GM12878 (cell line): ENCODE measurements at regions of chr2 and their contacts with region 1.

Region 1: GRCh38 chr2:170815746-170816503 is 762 bp upstream of the GAD1 start:
- DNase-seq: no peak
- ATAC-seq: peak; percentile 75
- H3K4me3 ChIP-seq: peak overlapping the region; percentile 54
- H3K27ac ChIP-seq: no peak overlapping the region
- H3K4me1 ChIP-seq: peaks cover 11% of the 10 kb centered on the region
- H3K27me3 ChIP-seq: peaks cover 5 to 34% of the 10 kb centered on the region in 2 experiments
- CTCF ChIP-seq: peak; percentile 65 to 79 (median 78)
- EP300 ChIP-seq: no peak
- POLR2A ChIP-seq: no peak
- RAD21 ChIP-seq: peak; percentile 80

Region 2: DNA sequence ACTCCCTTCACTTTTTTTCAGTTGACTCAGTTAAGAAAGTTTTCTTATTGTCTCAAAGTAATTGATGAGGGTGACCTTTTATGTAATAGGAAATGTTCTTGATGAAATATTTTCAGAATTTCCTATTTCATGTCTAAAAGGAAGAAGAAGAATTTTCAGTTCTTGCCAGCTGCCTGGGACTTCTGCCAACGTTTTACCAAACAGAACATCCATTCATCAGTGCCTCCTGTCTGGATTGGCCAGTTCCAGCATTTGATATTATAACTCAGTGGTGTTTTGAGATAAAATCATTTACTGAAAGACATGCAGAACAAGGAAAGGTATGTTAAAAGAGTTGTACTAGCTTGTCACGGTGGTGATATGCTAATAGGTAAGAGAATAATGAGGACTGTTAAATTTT is 742.6 kb before region 1 on chr2:
- CTCF ChIA-PET with region 1: no interaction called
- POLR2A ChIA-PET with region 1: no interaction called
- RAD21 ChIA-PET with region 1: no interaction called
- SMC1A ChIA-PET with region 1: no interaction called
- in situ Hi-C with region 1: no loop called
- intact Hi-C with region 1: no loop called
- DNase-seq: no peak
- ATAC-seq: no peak
- H3K4me3 ChIP-seq: no peak overlapping the region
- H3K27ac ChIP-seq: no peak overlapping the region
- H3K4me1 ChIP-seq: peaks cover 5% of the 10 kb centered on the region; the same call in 1 of the 2 replicates
- H3K27me3 ChIP-seq: no peaks in the 10 kb centered on the region
- CTCF ChIP-seq: no peak
- EP300 ChIP-seq: no peak
- POLR2A ChIP-seq: no peak
- RAD21 ChIP-seq: no peak

Region 3: DNA sequence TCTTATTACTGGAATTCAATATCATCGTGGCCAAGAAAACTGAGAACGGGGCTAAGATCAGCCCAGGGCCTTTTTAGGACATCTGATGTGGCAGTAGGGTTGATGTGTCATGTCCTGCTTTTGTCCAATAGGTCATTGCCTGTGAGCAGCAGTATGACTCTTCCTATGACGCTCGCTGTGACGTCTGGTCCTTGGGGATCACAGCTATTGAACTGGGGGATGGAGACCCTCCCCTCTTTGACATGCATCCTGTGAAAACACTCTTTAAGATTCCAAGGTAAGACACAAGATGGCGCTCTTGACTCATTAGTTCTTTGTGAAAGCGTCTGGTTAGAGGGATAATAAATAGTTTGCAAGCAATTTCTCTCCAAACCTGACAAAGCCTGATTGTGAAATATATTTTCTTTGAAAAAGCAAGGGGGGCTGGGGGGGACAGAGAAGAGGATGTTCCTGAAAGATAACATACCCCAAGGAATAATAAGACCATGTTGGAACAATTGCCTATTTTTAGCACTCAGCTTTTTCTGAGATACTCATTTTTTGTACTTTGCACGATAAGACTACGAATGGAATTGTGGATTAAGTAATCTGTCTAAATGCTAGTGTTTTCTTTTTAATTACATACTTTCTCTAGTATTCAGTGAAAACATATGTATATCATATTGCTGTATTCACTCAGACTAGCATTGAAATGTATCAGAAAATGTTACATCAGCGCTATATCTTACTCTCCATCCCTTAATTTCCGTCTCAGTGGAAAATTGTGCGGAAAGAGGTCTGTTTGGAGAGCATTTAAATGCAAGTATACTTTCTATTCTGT is 579.9 kb before region 1 on chr2:
- CTCF ChIA-PET with region 1: interaction called, 44 read pairs
- POLR2A ChIA-PET with region 1: no interaction called
- RAD21 ChIA-PET with region 1: interaction called, 18 read pairs
- SMC1A ChIA-PET with region 1: interaction called, 6 read pairs
- in situ Hi-C with region 1: loop called (anchors 5 kb)
- intact Hi-C with region 1: loop called (anchors 1 kb)
- DNase-seq: no peak
- ATAC-seq: peak; percentile 88
- H3K4me3 ChIP-seq: no peak overlapping the region
- H3K27ac ChIP-seq: no peak overlapping the region
- H3K4me1 ChIP-seq: no peaks in the 10 kb centered on the region
- H3K27me3 ChIP-seq: no peaks in the 10 kb centered on the region
- CTCF ChIP-seq: peak; percentile 62 to 68 (median 65)
- EP300 ChIP-seq: no peak
- POLR2A ChIP-seq: no peak
- RAD21 ChIP-seq: peak; percentile 91

Region 4: DNA sequence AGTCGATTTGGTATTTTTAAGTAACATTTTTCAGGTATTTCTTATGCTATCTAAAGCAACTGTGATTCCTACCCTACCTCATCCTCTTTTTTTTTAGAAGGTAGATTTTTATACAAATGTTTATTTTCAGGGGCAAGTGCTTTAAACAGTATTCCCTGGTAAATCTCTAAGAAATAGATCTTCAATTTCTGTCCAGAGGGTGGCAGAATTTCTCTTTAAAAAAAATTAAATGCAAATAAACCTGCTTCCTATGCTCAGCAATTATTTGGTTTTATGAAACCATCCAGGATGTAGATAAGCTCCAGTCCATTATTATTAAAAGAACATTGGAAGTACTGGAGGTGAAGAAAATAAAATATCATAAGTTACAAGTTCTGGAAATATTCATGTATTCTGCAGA is 446.0 kb before region 1 on chr2:
- CTCF ChIA-PET with region 1: interaction called, 67 read pairs
- POLR2A ChIA-PET with region 1: no interaction called
- RAD21 ChIA-PET with region 1: interaction called, 23 read pairs
- SMC1A ChIA-PET with region 1: interaction called, 53 read pairs
- in situ Hi-C with region 1: no loop called
- intact Hi-C with region 1: loop called (anchors 2 kb)
- DNase-seq: no peak
- ATAC-seq: 0 out of 3 replicates have a peak, but pooled peaks have one; percentile 36
- H3K4me3 ChIP-seq: no peak overlapping the region
- H3K27ac ChIP-seq: no peak overlapping the region
- H3K4me1 ChIP-seq: no peaks in the 10 kb centered on the region; the same call in 1 of the 2 replicates
- H3K27me3 ChIP-seq: no peaks in the 10 kb centered on the region; a peak in 1 of 4 replicates
- CTCF ChIP-seq: peak in 1 of 3 experiments; percentile 36; a peak in 1 of 6 replicates
- EP300 ChIP-seq: no peak
- POLR2A ChIP-seq: no peak
- RAD21 ChIP-seq: peak; percentile 24; the same call in 1 of the 2 replicates

Region 5: GRCh38 chr2:170434900-170435621 is 380.9 kb before region 1 on chr2:
- CTCF ChIA-PET with region 1: interaction called, 11 read pairs
- POLR2A ChIA-PET with region 1: no interaction called
- RAD21 ChIA-PET with region 1: no interaction called
- SMC1A ChIA-PET with region 1: interaction called, 3 read pairs
- in situ Hi-C with region 1: no loop called
- intact Hi-C with region 1: no loop called
- DNase-seq: peak; percentile 51
- ATAC-seq: peak; percentile 94
- H3K4me3 ChIP-seq: no peak overlapping the region
- H3K27ac ChIP-seq: no peak overlapping the region
- H3K4me1 ChIP-seq: peaks cover 6% of the 10 kb centered on the region; the same call in 1 of the 2 replicates
- H3K27me3 ChIP-seq: no peaks in the 10 kb centered on the region
- CTCF ChIP-seq: no peak
- EP300 ChIP-seq: no peak
- POLR2A ChIP-seq: no peak
- RAD21 ChIP-seq: no peak

Region 6: GRCh38 chr2:170680172-170680941 is 135.6 kb before region 1 on chr2:
- CTCF ChIA-PET with region 1: interaction called, 11 read pairs
- POLR2A ChIA-PET with region 1: no interaction called
- RAD21 ChIA-PET with region 1: interaction called, 10 read pairs
- SMC1A ChIA-PET with region 1: interaction called, 6 read pairs
- in situ Hi-C with region 1: no loop called
- intact Hi-C with region 1: no loop called
- DNase-seq: peak; percentile 40
- ATAC-seq: peak; percentile 99
- H3K4me3 ChIP-seq: peak overlapping the region; percentile 7; the same call in 1 of the 2 replicates
- H3K27ac ChIP-seq: no peak overlapping the region
- H3K4me1 ChIP-seq: peaks cover 13% of the 10 kb centered on the region; the same call in 1 of the 2 replicates
- H3K27me3 ChIP-seq: no peaks in the 10 kb centered on the region
- CTCF ChIP-seq: no peak
- EP300 ChIP-seq: peak in 1 of 2 experiments; percentile 50; a peak in 1 of 4 replicates
- POLR2A ChIP-seq: no peak
- RAD21 ChIP-seq: no peak

Region 7: GRCh38 chr2:170873035-170873692 is 57.2 kb after region 1 on chr2:
- CTCF ChIA-PET with region 1: interaction called, 16 read pairs
- POLR2A ChIA-PET with region 1: no interaction called
- RAD21 ChIA-PET with region 1: interaction called, 16 read pairs
- SMC1A ChIA-PET with region 1: interaction called, 6 read pairs
- in situ Hi-C with region 1: no loop called
- intact Hi-C with region 1: no loop called
- DNase-seq: peak; percentile 24
- ATAC-seq: peak; percentile 99
- H3K4me3 ChIP-seq: peak overlapping the region; percentile 49; the same call in 1 of the 2 replicates
- H3K27ac ChIP-seq: no peak overlapping the region
- H3K4me1 ChIP-seq: no peaks in the 10 kb centered on the region
- H3K27me3 ChIP-seq: no peaks in the 10 kb centered on the region
- CTCF ChIP-seq: peak; percentile 85 to 98 (median 94)
- EP300 ChIP-seq: no peak
- POLR2A ChIP-seq: no peak
- RAD21 ChIP-seq: peak; percentile 66